GM12878 (cell line): ENCODE measurements at regions of chr3 and their contacts with region 1.

Region 1: GRCh38 chr3:112321867-112322649 is 10.9 kb upstream of the CD200 start:
- DNase-seq: no peak
- ATAC-seq: no peak
- H3K4me3 ChIP-seq: no peak overlapping the region
- H3K27ac ChIP-seq: no peak overlapping the region
- H3K4me1 ChIP-seq: no peaks in the 10 kb centered on the region
- H3K27me3 ChIP-seq: no peaks in the 10 kb centered on the region
- CTCF ChIP-seq: no peak
- EP300 ChIP-seq: no peak
- POLR2A ChIP-seq: no peak
- RAD21 ChIP-seq: no peak

Region 2: GRCh38 chr3:112167758-112168157 is 154.3 kb before region 1 on chr3:
- CTCF ChIA-PET with region 1: no interaction called
- POLR2A ChIA-PET with region 1: interaction called, 11 read pairs
- RAD21 ChIA-PET with region 1: no interaction called
- SMC1A ChIA-PET with region 1: no interaction called
- in situ Hi-C with region 1: no loop called
- intact Hi-C with region 1: no loop called
- DNase-seq: peak; percentile 27
- ATAC-seq: peak; percentile 97
- H3K4me3 ChIP-seq: no peak overlapping the region
- H3K27ac ChIP-seq: no peak overlapping the region
- H3K4me1 ChIP-seq: no peaks in the 10 kb centered on the region
- H3K27me3 ChIP-seq: no peaks in the 10 kb centered on the region
- CTCF ChIP-seq: no peak
- EP300 ChIP-seq: peak; percentile 24 to 57; a peak in 2 of 4 replicates
- POLR2A ChIP-seq: no peak
- RAD21 ChIP-seq: no peak

Region 3: DNA sequence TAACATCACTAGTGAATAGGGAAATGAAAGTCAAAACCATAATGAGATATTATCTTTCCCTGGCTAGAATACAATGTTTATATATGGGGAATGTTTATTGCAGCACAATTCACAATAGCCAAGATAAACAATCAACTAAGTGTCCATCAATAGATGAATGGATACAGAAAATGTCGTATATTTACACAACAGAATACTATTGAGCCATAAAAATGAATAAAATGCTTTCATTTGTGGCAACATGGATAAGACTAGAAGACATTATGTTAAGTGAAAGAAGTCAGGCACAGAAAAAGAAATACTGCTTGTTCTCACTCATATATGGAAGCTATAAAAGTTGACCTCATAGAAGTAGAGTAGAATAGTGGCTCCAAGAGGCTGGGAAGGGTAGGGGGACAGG is 93.3 kb before region 1 on chr3:
- CTCF ChIA-PET with region 1: no interaction called
- POLR2A ChIA-PET with region 1: no interaction called
- RAD21 ChIA-PET with region 1: no interaction called
- SMC1A ChIA-PET with region 1: no interaction called
- in situ Hi-C with region 1: no loop called
- intact Hi-C with region 1: no loop called
- DNase-seq: no peak
- ATAC-seq: no peak
- H3K4me3 ChIP-seq: no peak overlapping the region
- H3K27ac ChIP-seq: no peak overlapping the region
- H3K4me1 ChIP-seq: no peaks in the 10 kb centered on the region
- H3K27me3 ChIP-seq: no peaks in the 10 kb centered on the region
- CTCF ChIP-seq: no peak
- EP300 ChIP-seq: no peak
- POLR2A ChIP-seq: no peak
- RAD21 ChIP-seq: no peak

Region 4: DNA sequence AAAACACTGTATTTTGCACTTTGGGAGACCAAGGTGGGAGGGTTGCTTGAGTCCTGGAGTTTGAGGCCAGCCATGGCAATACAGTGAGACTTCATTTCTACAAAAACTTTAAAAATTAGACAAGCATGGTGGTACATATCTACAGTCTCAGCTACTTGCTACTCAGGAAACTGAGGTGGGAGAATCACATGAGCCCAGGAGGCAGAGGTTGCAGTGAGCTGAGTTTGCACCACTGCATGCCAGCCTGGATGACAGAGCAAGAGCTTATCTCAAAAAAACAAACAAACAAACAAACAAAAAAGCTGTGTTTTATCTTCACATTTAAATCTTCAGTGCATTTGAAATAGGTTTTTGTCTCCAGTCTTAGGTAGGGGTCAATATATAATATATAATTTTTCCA is 23.3 kb before region 1 on chr3:
- CTCF ChIA-PET with region 1: interaction called, 103 read pairs
- POLR2A ChIA-PET with region 1: no interaction called
- RAD21 ChIA-PET with region 1: interaction called, 75 read pairs
- SMC1A ChIA-PET with region 1: interaction called, 97 read pairs
- in situ Hi-C with region 1: no loop called
- intact Hi-C with region 1: loop called (anchors 2 kb)
- DNase-seq: no peak
- ATAC-seq: no peak
- H3K4me3 ChIP-seq: no peak overlapping the region
- H3K27ac ChIP-seq: no peak overlapping the region
- H3K4me1 ChIP-seq: peaks cover 18% of the 10 kb centered on the region
- H3K27me3 ChIP-seq: no peaks in the 10 kb centered on the region
- CTCF ChIP-seq: no peak
- EP300 ChIP-seq: no peak
- POLR2A ChIP-seq: no peak
- RAD21 ChIP-seq: no peak

Region 5: GRCh38 chr3:112303764-112304325 is 18.2 kb before region 1 on chr3:
- CTCF ChIA-PET with region 1: interaction called, 8 read pairs
- POLR2A ChIA-PET with region 1: no interaction called
- RAD21 ChIA-PET with region 1: interaction called, 5 read pairs
- SMC1A ChIA-PET with region 1: interaction called, 13 read pairs
- in situ Hi-C with region 1: no loop called
- intact Hi-C with region 1: no loop called
- DNase-seq: no peak
- ATAC-seq: peak; percentile 64
- H3K4me3 ChIP-seq: peak overlapping the region; percentile 50; the same call in 1 of the 2 replicates
- H3K27ac ChIP-seq: 0 out of 2 replicates have a peak overlapping the region, but pooled peaks have one; percentile 21
- H3K4me1 ChIP-seq: peaks cover 9% of the 10 kb centered on the region
- H3K27me3 ChIP-seq: no peaks in the 10 kb centered on the region
- CTCF ChIP-seq: no peak
- EP300 ChIP-seq: no peak
- POLR2A ChIP-seq: no peak
- RAD21 ChIP-seq: no peak

Region 6: GRCh38 chr3:112531358-112531781 is 209.3 kb after region 1 on chr3:
- CTCF ChIA-PET with region 1: interaction called, 8 read pairs
- POLR2A ChIA-PET with region 1: no interaction called
- RAD21 ChIA-PET with region 1: interaction called, 5 read pairs
- SMC1A ChIA-PET with region 1: interaction called, 15 read pairs
- in situ Hi-C with region 1: no loop called
- intact Hi-C with region 1: loop called (anchors 2 kb)
- DNase-seq: no peak
- ATAC-seq: peak; percentile 39; the same call in 2 of the 3 replicates
- H3K4me3 ChIP-seq: no peak overlapping the region
- H3K27ac ChIP-seq: no peak overlapping the region
- H3K4me1 ChIP-seq: no peaks in the 10 kb centered on the region
- H3K27me3 ChIP-seq: no peaks in the 10 kb centered on the region
- CTCF ChIP-seq: peak; percentile 21 to 43 (median 41); a peak in 3 of 6 replicates
- EP300 ChIP-seq: no peak
- POLR2A ChIP-seq: no peak
- RAD21 ChIP-seq: peak; percentile 36; the same call in 1 of the 2 replicates